Ascending aorta (tissue), 2 donors: ENCODE measurements at regions of chr9 and their contacts with region 1.

Region 1: GRCh38 chr9:129177791-129178559 is at the start of gene IER5L:
- DNase-seq: peak; percentile 89 to 98
- H3K4me3 ChIP-seq: peak within 1 kb of the TSS; percentile 81 to 100
- H3K27ac ChIP-seq: peak within 1 kb of the TSS; percentile 97 to 100
- H3K4me1 ChIP-seq: peaks cover 9 to 21% of the 10 kb centered on the region in 2 donors
- H3K27me3 ChIP-seq: no peaks in the 10 kb centered on the region
- CTCF ChIP-seq: no peak
- total RNA-seq, gene IER5L: 86.1 TPM

Region 2: GRCh38 chr9:129139993-129140396 is 38.0 kb before region 1 on chr9:
- intact Hi-C with region 1: loop called (anchors 1 kb)
- DNase-seq: peak; percentile 91 to 98
- H3K4me3 ChIP-seq: peak overlapping the region; percentile 52 to 56
- H3K27ac ChIP-seq: peak overlapping the region; percentile 98
- H3K4me1 ChIP-seq: peaks cover 49 to 71% of the 10 kb centered on the region in 2 donors
- H3K27me3 ChIP-seq: no peaks in the 10 kb centered on the region
- CTCF ChIP-seq: no peak

Region 3: DNA sequence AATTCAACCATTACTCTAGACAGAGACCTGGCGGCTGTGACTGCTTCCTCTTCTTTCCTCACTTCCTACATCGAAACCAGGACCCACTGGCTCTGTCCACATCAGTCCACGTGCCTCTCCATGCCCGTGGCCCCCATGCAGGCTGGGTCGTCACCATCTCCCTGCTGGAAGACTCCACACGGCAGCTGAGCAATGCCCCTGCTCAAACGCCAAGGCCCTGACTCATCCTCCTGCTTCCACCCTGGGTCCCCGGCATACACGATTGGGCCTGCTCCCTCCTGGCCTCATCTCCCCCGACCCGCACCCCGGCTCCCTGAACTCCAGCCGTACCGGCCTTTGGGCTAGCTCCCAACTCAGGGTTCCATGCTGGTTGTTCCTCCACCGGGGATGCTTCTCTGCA is 67.3 kb after region 1 on chr9:
- intact Hi-C with region 1: no loop called
- DNase-seq: no peak
- H3K4me3 ChIP-seq: no peak overlapping the region
- H3K27ac ChIP-seq: no peak overlapping the region
- H3K4me1 ChIP-seq: no peaks in the 10 kb centered on the region
- H3K27me3 ChIP-seq: no peaks in the 10 kb centered on the region
- CTCF ChIP-seq: no peak

Region 4: GRCh38 chr9:129287619-129288305 is 109.8 kb after region 1 on chr9:
- intact Hi-C with region 1: no loop called
- DNase-seq: peak in 1 of 2 donors; percentile 41
- H3K4me3 ChIP-seq: no peak overlapping the region
- H3K27ac ChIP-seq: no peak overlapping the region
- H3K4me1 ChIP-seq: no peaks in the 10 kb centered on the region
- H3K27me3 ChIP-seq: no peaks in the 10 kb centered on the region
- CTCF ChIP-seq: no peak

Region 5: DNA sequence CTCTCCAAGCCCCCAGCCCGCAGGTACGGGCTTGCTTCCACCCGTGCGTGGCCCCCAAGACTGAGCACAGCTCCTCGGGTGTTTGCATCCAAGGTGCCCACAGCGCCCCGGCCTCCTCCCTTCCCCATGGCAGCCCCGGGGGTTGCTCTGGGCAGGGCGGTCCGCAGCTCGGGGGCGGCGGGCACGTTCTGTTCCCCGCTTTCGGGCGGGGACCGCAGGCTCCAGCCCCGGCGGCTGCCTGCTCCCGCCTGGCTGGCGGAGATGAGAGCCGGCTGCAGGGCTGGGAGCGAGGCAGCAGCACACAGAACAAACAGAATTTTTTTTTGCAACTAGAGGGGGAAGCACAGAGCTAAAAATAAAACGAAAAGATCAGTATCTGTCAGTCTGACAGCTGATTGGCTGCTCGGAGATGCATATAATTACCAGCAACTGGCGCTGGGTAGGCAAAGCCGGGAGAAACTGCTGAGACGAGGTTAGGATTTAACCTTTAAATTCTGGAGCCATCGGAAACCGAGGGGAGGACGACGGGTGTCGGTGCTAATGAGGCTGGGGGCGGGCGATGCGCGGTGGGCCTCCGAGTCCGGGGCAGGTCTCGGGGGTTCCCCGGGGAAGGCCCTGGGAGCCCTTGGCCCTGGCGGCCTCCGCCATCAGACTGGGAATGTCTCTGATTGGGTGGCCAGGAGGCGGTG is 142.7 kb after region 1 on chr9:
- intact Hi-C with region 1: loop called (anchors 5 kb)
- DNase-seq: peak in 1 of 2 donors; percentile 88
- H3K4me3 ChIP-seq: peak overlapping the region; percentile 54 to 60
- H3K27ac ChIP-seq: peak overlapping the region; percentile 92 to 94
- H3K4me1 ChIP-seq: peaks cover 30 to 66% of the 10 kb centered on the region in 2 donors
- H3K27me3 ChIP-seq: no peaks in the 10 kb centered on the region
- CTCF ChIP-seq: peak in 2 of 3 experiments; percentile 2 to 17

Region 6: GRCh38 chr9:129413537-129414376 is 235.8 kb after region 1 on chr9:
- intact Hi-C with region 1: loop called (anchors 2 kb)
- DNase-seq: peak; percentile 96 to 99
- H3K4me3 ChIP-seq: peak overlapping the region; percentile 72 to 82
- H3K27ac ChIP-seq: peak overlapping the region; percentile 99 to 100
- H3K4me1 ChIP-seq: peaks cover 12 to 28% of the 10 kb centered on the region in 2 donors
- H3K27me3 ChIP-seq: no peaks in the 10 kb centered on the region
- CTCF ChIP-seq: peak in 2 of 3 experiments; percentile 2 to 26

Region 7: GRCh38 chr9:129495534-129496325 is 317.8 kb after region 1 on chr9:
- intact Hi-C with region 1: loop called (anchors 1 kb)
- DNase-seq: peak; percentile 68 to 96
- H3K4me3 ChIP-seq: peak overlapping the region; percentile 68 to 72
- H3K27ac ChIP-seq: peak overlapping the region; percentile 98 to 100
- H3K4me1 ChIP-seq: peaks cover 15 to 62% of the 10 kb centered on the region in 2 donors
- H3K27me3 ChIP-seq: no peaks in the 10 kb centered on the region
- CTCF ChIP-seq: no peak

Region 8: GRCh38 chr9:129626079-129626624 is 448.2 kb after region 1 on chr9 and contains the start of gene NTMT1:
- intact Hi-C with region 1: loop called (anchors 5 kb)
- DNase-seq: peak; percentile 43 to 93
- H3K4me3 ChIP-seq: peak within 1 kb of the TSS; percentile 70 to 97
- H3K27ac ChIP-seq: peak within 1 kb of the TSS; percentile 81 to 97
- H3K4me1 ChIP-seq: peaks cover 4 to 22% of the 10 kb centered on the region in 2 donors
- H3K27me3 ChIP-seq: no peaks in the 10 kb centered on the region
- CTCF ChIP-seq: no peak
- total RNA-seq, gene NTMT1: 6.9 TPM